HCT116 (cell line): ENCODE measurements at regions of chr4 and their contacts with region 1.

Region 1: GRCh38 chr4:10413177-10413576 is 44.0 kb downstream of the ZNF518B start:
- DNase-seq: no peak
- ATAC-seq: no peak
- H3K4me3 ChIP-seq: no peak overlapping the region
- H3K27ac ChIP-seq: no peak overlapping the region
- H3K4me1 ChIP-seq: peaks cover 0 to 9% of the 10 kb centered on the region in 2 experiments; a peak in 3 of 4 replicates
- H3K27me3 ChIP-seq: no peaks in the 10 kb centered on the region
- CTCF ChIP-seq: no peak
- POLR2A ChIP-seq: no peak
- RAD21 ChIP-seq: no peak

Region 2: GRCh38 chr4:10384974-10385373 is 28.2 kb before region 1 on chr4:
- CTCF ChIA-PET with region 1: no interaction called
- POLR2A ChIA-PET with region 1: no interaction called
- RAD21 ChIA-PET with region 1: no interaction called
- intact Hi-C with region 1: loop called (anchors 1 kb)
- DNase-seq: no peak
- ATAC-seq: no peak; the same call in 1 of the 2 replicates
- H3K4me3 ChIP-seq: no peak overlapping the region
- H3K27ac ChIP-seq: no peak overlapping the region
- H3K4me1 ChIP-seq: no peaks in the 10 kb centered on the region
- H3K27me3 ChIP-seq: peaks cover 22% of the 10 kb centered on the region
- CTCF ChIP-seq: no peak
- POLR2A ChIP-seq: no peak
- RAD21 ChIP-seq: no peak